AG04449 (cell line): ENCODE measurements at regions of chr12 and their contacts with region 1.

Region 1: GRCh38 chr12:117212563-117213190 is 22.4 kb upstream of the FBXO21 start:
- DNase-seq: peak; percentile 36
- H3K4me3 ChIP-seq: no peak overlapping the region
- CTCF ChIP-seq: peak; percentile 79

Region 2: GRCh38 chr12:117155278-117156060 is 57.2 kb before region 1 on chr12:
- CTCF ChIA-PET with region 1: no interaction called
- POLR2A ChIA-PET with region 1: no interaction called
- DNase-seq: no peak
- H3K4me3 ChIP-seq: no peak overlapping the region
- CTCF ChIP-seq: peak; percentile 72

Region 3: GRCh38 chr12:117202556-117202955 is 10.1 kb before region 1 on chr12:
- CTCF ChIA-PET with region 1: interaction called, 28 read pairs
- POLR2A ChIA-PET with region 1: no interaction called
- DNase-seq: no peak
- H3K4me3 ChIP-seq: no peak overlapping the region
- CTCF ChIP-seq: no peak

Region 4: DNA sequence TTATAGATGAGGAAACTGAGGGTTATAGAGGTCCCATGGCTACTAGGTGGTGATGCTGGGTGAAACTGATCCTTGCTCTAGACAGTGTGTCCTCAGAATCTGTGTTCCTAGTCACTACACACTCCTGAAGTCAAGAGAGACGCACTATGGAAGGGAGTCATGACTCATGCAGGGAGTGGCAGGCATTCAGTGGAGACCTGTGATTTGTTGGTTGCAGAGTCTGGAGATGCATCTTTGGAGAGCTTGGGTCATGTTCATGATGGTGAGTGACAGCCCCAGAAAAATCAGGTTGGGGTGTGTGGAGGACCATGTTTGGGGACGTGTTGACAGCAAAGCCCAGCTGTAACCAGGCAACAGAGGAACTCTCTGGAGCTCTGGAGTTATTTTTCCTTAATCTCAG is 15.6 kb after region 1 on chr12:
- CTCF ChIA-PET with region 1: interaction called, 56 read pairs
- POLR2A ChIA-PET with region 1: no interaction called
- DNase-seq: no peak
- H3K4me3 ChIP-seq: no peak overlapping the region
- CTCF ChIP-seq: no peak

Region 5: GRCh38 chr12:117236456-117237001 is 23.9 kb after region 1 on chr12:
- CTCF ChIA-PET with region 1: interaction called, 56 read pairs
- POLR2A ChIA-PET with region 1: no interaction called
- DNase-seq: no peak
- H3K4me3 ChIP-seq: no peak overlapping the region
- CTCF ChIP-seq: peak; percentile 64

Region 6: DNA sequence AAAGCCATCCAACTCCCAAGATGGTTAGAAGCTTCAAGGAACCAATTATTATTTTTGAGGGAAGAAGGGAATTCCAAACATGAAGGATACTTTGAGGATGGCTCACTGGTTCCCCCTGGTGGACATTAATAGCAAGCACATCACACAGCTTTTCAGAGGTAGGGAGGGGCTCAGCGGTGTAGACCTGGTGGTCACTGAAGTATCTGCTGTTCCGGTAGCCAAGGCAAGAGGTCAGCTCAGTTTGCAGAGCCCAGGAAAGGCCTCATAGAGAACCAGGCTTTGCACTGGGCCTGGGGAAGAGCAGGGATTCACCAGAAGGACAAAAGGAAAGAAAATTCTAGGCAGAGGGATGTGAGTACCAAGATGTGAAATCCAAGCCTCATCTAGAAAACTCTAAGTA is 637.4 kb after region 1 on chr12:
- CTCF ChIA-PET with region 1: interaction called, 163 read pairs
- POLR2A ChIA-PET with region 1: no interaction called
- DNase-seq: no peak
- H3K4me3 ChIP-seq: no peak overlapping the region
- CTCF ChIP-seq: peak; percentile 81